Activated CD8-positive, alpha-beta memory T cell treated with anti-CD3 and anti-CD28 coated beads, Interleukin-2, amount 10 ng/mL, durations not matched to agents 7 days and 5 days (primary cell): ENCODE measurements at regions of chr3 and their contacts with region 1.

Region 1: DNA sequence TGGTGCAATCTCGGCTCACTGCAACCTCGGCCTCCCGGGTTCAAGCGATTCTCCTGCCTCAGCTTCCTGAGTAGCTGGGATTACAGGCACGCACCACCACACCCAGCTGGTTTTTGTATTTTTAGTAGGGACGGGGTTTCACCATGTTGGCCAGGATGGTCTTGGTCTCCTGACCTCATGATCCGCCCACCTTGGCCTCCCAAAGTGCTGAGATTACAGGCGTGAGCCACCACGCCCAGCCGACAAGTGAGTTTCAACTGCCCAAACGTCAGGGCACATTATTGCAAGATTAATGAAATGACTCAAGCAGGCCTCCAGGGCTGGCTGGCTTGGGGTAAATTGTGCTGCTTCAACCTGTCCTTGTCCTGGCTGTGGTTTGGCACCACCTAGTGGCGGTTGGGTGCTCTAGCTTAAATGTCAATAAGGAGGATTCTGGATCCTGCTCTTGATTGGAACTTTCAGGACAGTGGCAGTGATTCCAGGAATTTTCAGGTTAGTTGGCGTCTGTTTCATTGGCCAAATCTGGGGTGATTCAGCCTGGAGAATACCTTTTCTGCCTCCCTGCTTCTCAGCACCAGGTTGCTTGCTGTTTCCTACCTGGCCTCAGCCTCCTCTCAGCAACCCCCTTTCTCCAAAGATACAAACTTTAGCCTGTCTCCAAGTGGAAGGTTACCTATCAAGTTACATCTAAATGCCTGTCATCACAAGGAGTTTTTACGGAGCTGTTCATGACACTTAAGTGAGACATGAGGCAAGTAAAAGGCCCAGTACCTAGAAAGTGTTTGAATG is 32.4 kb upstream of the SACM1L start:
- DNase-seq: peak; percentile 92
- ATAC-seq: peak; percentile 97
- H3K4me3 Mint-ChIP-seq: no peak overlapping the region
- H3K27ac Mint-ChIP-seq: peak overlapping the region; percentile 41
- H3K4me1 Mint-ChIP-seq: peaks cover 25% of the 10 kb centered on the region
- H3K27me3 Mint-ChIP-seq: no peaks in the 10 kb centered on the region

Region 2: DNA sequence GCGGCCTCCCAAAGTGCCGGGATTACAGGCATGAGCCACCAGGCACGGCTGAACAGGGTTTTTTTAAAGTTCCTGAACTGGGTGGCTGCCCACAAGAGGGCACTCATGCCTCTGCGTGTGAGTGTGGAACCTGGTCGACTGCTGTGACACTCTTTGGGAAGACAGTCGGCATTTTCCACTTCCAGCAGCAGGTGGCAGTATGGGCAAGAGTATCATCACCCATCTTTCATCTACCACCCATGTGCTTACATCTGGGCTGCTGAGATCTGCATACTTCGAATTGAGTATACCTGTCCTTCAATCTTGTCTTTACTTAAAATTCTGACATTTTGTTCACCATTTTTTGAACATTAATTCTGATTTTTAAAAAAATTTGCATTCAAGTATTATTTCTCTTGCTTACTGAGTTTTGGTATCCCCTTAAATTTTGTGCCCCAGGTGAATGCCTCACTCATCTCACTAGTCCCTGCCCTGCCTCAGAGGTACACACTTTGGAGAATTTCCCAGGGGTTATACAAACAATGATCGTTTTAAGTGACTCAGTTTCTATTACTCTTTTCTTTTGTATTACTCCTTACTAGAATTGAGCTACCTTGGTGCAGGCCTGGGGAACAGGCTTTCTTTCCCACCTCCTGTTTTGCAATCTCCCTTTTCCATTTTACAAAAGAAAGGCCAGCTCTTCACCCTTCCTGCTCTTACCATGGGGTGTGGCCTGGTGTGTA is 618.9 kb before region 1 on chr3:
- CTCF ChIA-PET with region 1: interaction called, 24 read pairs
- DNase-seq: peak; percentile 95
- ATAC-seq: peak; percentile 84
- H3K4me3 Mint-ChIP-seq: no peak overlapping the region
- H3K27ac Mint-ChIP-seq: no peak overlapping the region
- H3K4me1 Mint-ChIP-seq: peaks cover 48% of the 10 kb centered on the region
- H3K27me3 Mint-ChIP-seq: peaks cover 28% of the 10 kb centered on the region

Region 3: GRCh38 chr3:45507820-45508317 is 148.9 kb before region 1 on chr3:
- CTCF ChIA-PET with region 1: interaction called, 66 read pairs
- DNase-seq: no peak
- ATAC-seq: no peak
- H3K4me3 Mint-ChIP-seq: no peak overlapping the region
- H3K27ac Mint-ChIP-seq: no peak overlapping the region
- H3K4me1 Mint-ChIP-seq: no peaks in the 10 kb centered on the region
- H3K27me3 Mint-ChIP-seq: no peaks in the 10 kb centered on the region

Region 4: GRCh38 chr3:45592830-45593707 is 63.7 kb before region 1 on chr3:
- CTCF ChIA-PET with region 1: interaction called, 28 read pairs
- DNase-seq: peak; percentile 87
- ATAC-seq: peak; percentile 48
- H3K4me3 Mint-ChIP-seq: peak overlapping the region; percentile 93
- H3K27ac Mint-ChIP-seq: peak overlapping the region; percentile 78
- H3K4me1 Mint-ChIP-seq: peaks cover 42% of the 10 kb centered on the region
- H3K27me3 Mint-ChIP-seq: peaks cover 6% of the 10 kb centered on the region

Region 5: DNA sequence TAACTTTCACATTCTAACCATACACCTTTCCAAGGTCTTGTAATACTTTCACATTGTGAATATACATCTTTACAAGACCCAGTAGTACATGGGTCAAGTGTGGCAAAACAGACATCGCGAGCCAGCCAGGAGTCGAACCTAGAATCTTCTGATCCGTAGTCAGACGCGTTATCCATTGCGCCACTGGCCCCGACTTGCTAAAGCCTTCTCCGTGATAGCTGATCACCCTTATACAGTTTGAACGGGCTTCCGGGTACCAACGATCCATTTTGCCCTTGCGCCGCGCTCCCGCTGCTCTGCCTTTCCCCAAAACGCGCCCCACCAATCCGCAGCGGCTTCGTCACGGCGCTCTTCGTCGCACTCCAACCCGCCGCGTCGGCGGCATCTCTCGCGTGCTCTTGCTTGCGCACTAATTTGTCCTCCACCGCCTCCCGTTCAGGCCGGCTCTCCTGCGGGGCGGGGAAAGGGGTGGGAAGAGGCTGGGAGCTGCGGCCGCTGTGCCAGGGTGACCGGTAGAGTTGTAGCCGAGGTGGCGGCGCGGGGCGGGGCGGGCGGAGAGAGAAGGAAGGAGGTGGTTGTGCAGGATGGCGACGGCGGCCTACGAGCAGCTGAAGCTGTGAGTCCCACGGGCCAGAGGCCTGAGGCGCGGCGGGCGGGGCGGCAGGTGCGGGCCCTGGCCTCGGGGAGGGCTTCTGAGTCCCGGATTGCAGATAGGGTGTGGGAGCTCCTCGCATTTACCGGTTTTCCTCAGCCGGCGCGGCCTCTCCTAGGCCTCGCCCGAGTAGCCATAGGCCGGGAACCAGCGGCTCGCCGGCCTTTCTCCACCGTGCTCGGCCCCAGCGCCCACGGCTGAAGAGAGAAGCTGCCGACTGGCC is 32.4 kb after region 1 on chr3 and contains the start of gene SACM1L:
- CTCF ChIA-PET with region 1: interaction called, 22 read pairs
- DNase-seq: peak; percentile 98
- ATAC-seq: peak; percentile 88
- H3K4me3 Mint-ChIP-seq: peak within 1 kb of the TSS; percentile 81
- H3K27ac Mint-ChIP-seq: peak within 1 kb of the TSS; percentile 87
- H3K4me1 Mint-ChIP-seq: peaks cover 40% of the 10 kb centered on the region
- H3K27me3 Mint-ChIP-seq: peaks cover 3% of the 10 kb centered on the region
- total RNA-seq, gene SACM1L: 71.6 to 88.7 TPM